ENCODE measurements at regions of chr16 and their contacts with region 1.

Region 1: GRCh38 chr16:21501909-21502667 is 97.3 kb upstream of the METTL9 start:
- DNase-seq: peak; percentile 89 to 98
- H3K4me3 ChIP-seq: peak overlapping the region; percentile 90
- H3K27ac ChIP-seq: peak overlapping the region; percentile 95 to 98
- H3K4me1 ChIP-seq: peaks cover 0 to 28% (median 2%) of the 10 kb centered on the region in 4 donors
- H3K27me3 ChIP-seq: no peaks in the 10 kb centered on the region
- CTCF ChIP-seq: no peak

Region 2: GRCh38 chr16:21277927-21278706 is 224.0 kb before region 1 on chr16 and contains the start of gene CRYM:
- intact Hi-C with region 1: no loop called
- DNase-seq: peak; percentile 43 to 76
- H3K4me3 ChIP-seq: peak within 1 kb of the TSS; percentile 37 to 60
- H3K27ac ChIP-seq: peak within 1 kb of the TSS; percentile 17 to 59
- H3K4me1 ChIP-seq: peaks cover 0 to 12% (median 9%) of the 10 kb centered on the region in 4 donors
- H3K27me3 ChIP-seq: peaks cover 0 to 17% of the 10 kb centered on the region in 2 donors
- CTCF ChIP-seq: peak; percentile 63 to 90

Region 3: GRCh38 chr16:21554795-21555585 is 52.9 kb after region 1 on chr16:
- intact Hi-C with region 1: loop called (anchors 10 kb)
- DNase-seq: peak; percentile 80 to 93
- H3K4me3 ChIP-seq: peak overlapping the region in 1 of 2 donors; percentile 0
- H3K27ac ChIP-seq: peak overlapping the region in 1 of 2 donors; percentile 13
- H3K4me1 ChIP-seq: peaks cover 0 to 31% (median 9%) of the 10 kb centered on the region in 4 donors
- H3K27me3 ChIP-seq: peaks cover 0 to 8% of the 10 kb centered on the region in 2 donors
- CTCF ChIP-seq: peak; percentile 98 to 99